Astrocyte of the cerebellum (primary cell): ENCODE measurements at regions of chr2 and their contacts with region 1.

Region 1: GRCh38 chr2:56009758-56010458 is 86.3 kb upstream of the EFEMP1 start:
- DNase-seq: peak; percentile 50
- H3K4me3 ChIP-seq: no peak overlapping the region
- CTCF ChIP-seq: peak; percentile 55

Region 2: GRCh38 chr2:55948176-55948921 is 61.6 kb before region 1 on chr2:
- in situ Hi-C with region 1: loop called (anchors 5 kb)
- DNase-seq: no peak
- H3K4me3 ChIP-seq: no peak overlapping the region
- CTCF ChIP-seq: no peak